Esophagus squamous epithelium (tissue), 5 donors: ENCODE measurements at regions of chr2 and their contacts with region 1.

Region 1: GRCh38 chr2:218307415-218308090 is 15.2 kb upstream of the TMBIM1 start:
- DNase-seq: no peak
- H3K4me3 ChIP-seq: no peak overlapping the region
- H3K27ac ChIP-seq: no peak overlapping the region
- H3K4me1 ChIP-seq: no peaks in the 10 kb centered on the region
- H3K27me3 ChIP-seq: no peaks in the 10 kb centered on the region
- CTCF ChIP-seq: no peak
- POLR2A ChIP-seq: no peak

Region 2: GRCh38 chr2:218152765-218153164 is 154.8 kb before region 1 on chr2:
- intact Hi-C with region 1: no loop called
- DNase-seq: no peak
- H3K4me3 ChIP-seq: no peak overlapping the region
- H3K27ac ChIP-seq: peak overlapping the region in 3 of 4 donors; percentile 49 to 83 (median 61)
- H3K4me1 ChIP-seq: peaks cover 5 to 29% (median 6%) of the 10 kb centered on the region in 3 donors
- H3K27me3 ChIP-seq: no peaks in the 10 kb centered on the region
- CTCF ChIP-seq: peak in 1 of 6 experiments; percentile 28
- POLR2A ChIP-seq: no peak

Region 3: GRCh38 chr2:218186355-218186766 is 121.2 kb before region 1 on chr2:
- intact Hi-C with region 1: no loop called
- DNase-seq: no peak
- H3K4me3 ChIP-seq: peak overlapping the region in 1 of 4 donors; percentile 19
- H3K27ac ChIP-seq: peak overlapping the region in 1 of 4 donors; percentile 3
- H3K4me1 ChIP-seq: peaks cover 0 to 19% (median 7%) of the 10 kb centered on the region in 3 donors
- H3K27me3 ChIP-seq: peaks cover 0 to 5% (median 0%) of the 10 kb centered on the region in 4 donors
- CTCF ChIP-seq: peak; percentile 77 to 90 (median 84)
- POLR2A ChIP-seq: no peak

Region 4: GRCh38 chr2:218345491-218346216 is 38.1 kb after region 1 on chr2:
- intact Hi-C with region 1: loop called (anchors 5 kb)
- DNase-seq: no peak
- H3K4me3 ChIP-seq: no peak overlapping the region
- H3K27ac ChIP-seq: no peak overlapping the region
- H3K4me1 ChIP-seq: peaks cover 0 to 9% (median 0%) of the 10 kb centered on the region in 3 donors
- H3K27me3 ChIP-seq: no peaks in the 10 kb centered on the region
- CTCF ChIP-seq: no peak
- POLR2A ChIP-seq: no peak

Region 5: GRCh38 chr2:218367415-218368153 is 60.0 kb after region 1 on chr2:
- intact Hi-C with region 1: no loop called
- DNase-seq: peak; percentile 46
- H3K4me3 ChIP-seq: peak overlapping the region; percentile 51 to 70 (median 60)
- H3K27ac ChIP-seq: peak overlapping the region; percentile 83 to 93 (median 92)
- H3K4me1 ChIP-seq: peaks cover 0 to 18% (median 6%) of the 10 kb centered on the region in 3 donors
- H3K27me3 ChIP-seq: no peaks in the 10 kb centered on the region
- CTCF ChIP-seq: no peak
- POLR2A ChIP-seq: peak in 3 of 4 donors; percentile 37 to 92 (median 88)